GM12878 (cell line): ENCODE measurements at regions of chr4 and their contacts with region 1.

Region 1: DNA sequence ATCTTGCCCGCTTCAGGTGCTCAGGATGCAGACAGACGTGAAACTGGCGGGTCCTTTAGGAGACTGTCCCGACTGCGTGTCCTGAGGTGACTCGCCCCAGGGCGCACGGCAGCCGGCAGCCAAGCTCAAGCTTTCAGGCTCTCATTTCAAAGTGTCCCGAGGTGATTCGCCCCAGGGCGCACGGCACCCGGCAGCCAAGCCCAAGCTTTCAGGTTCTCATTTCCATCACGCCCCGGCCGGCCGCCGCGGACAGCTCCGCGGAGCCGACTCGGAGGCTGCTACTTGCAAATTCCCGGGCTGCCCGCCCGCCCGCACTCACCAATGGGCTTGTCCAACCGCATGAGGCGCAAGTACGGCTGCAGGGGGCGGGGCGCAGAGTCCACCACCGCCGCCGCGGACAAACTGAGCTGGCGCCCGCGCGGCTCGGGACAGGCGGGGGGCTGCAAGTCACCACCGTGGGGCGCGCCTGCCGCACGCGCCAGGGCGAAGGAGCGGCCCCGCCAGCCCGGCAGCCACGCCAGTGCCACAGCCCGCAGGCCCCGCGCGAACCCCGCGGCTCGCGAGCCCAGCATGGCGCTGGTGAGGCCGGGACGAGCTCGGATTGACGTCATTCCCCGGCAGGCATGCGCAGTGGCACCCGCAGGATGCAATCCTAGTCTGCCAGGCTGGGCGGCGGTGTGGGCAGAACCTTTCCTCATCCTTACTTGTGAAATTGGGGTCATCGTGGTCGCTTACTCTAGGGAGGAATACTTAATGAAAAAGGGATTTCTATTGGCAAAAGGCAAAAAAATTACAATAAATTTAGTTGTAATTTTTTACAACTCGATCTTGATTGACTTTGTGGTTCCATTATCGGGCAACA is at the start of gene COQ2:
- DNase-seq: no peak
- ATAC-seq: peak; percentile 80
- H3K4me3 ChIP-seq: peak within 1 kb of the TSS; percentile 69
- H3K27ac ChIP-seq: peak within 1 kb of the TSS; percentile 63
- H3K4me1 ChIP-seq: peaks cover 6% of the 10 kb centered on the region
- H3K27me3 ChIP-seq: no peaks in the 10 kb centered on the region
- CTCF ChIP-seq: peak in 2 of 3 experiments; percentile 10 to 16; a peak in 1 of 6 replicates
- EP300 ChIP-seq: no peak
- POLR2A ChIP-seq: peak; percentile 84
- RAD21 ChIP-seq: no peak
- polyA plus RNA-seq, gene COQ2: 5.0 to 11.2 TPM

Region 2: DNA sequence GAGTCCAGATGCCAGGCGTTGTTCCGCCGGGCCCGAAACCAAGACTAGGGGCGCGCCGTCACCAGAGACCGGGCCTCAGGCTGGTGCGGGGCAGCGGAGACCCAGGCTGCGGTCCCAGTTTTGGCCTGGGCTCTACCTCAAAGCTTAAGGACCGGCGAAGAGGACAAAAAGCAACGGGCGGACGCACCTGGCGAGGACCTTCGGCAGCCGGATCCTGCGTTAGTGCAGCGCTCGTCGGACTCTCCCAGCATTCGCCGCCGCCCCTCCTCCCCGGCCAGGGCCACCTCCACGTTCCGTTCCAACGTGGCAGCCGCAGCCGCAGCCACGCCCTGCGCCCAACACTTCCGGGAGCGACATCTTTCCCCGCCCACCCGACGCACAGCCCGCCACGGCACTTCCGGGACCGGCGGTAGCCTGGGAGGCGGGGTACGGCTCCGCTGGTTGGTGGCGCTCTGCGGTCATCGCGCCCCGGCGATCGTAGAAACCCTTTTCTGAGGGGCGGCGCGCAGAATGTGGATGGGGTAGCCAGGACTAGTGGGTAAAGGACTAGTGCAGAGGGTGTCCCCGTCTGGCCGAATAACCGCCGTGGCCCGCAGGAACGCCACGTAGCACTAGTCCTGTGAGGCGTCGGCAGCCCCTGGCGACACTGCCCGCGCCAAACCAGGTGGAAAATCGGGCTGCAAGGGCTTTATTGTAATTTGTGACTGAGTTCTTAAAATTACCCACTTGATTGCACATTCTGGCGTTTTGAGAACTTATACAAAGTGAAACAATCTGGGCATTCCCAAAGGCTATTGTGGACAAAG is 393.3 kb before region 1 on chr4 and contains the start of gene SEC31A:
- CTCF ChIA-PET with region 1: interaction called, 4 read pairs
- POLR2A ChIA-PET with region 1: no interaction called
- RAD21 ChIA-PET with region 1: interaction called, 5 read pairs
- SMC1A ChIA-PET with region 1: interaction called, 5 read pairs
- in situ Hi-C with region 1: loop called (anchors 5 kb)
- intact Hi-C with region 1: no loop called
- DNase-seq: peak; percentile 84
- ATAC-seq: peak; percentile 90
- H3K4me3 ChIP-seq: peak within 1 kb of the TSS; percentile 90
- H3K27ac ChIP-seq: peak within 1 kb of the TSS; percentile 94
- H3K4me1 ChIP-seq: peaks cover 3% of the 10 kb centered on the region; the same call in 1 of the 2 replicates
- H3K27me3 ChIP-seq: no peaks in the 10 kb centered on the region
- CTCF ChIP-seq: 0 out of 6 replicates have a peak, but pooled peaks of 1 of the 3 experiments have one; percentile 15
- EP300 ChIP-seq: peak in 1 of 2 experiments; percentile 31; a peak in 1 of 4 replicates
- POLR2A ChIP-seq: peak; percentile 99
- RAD21 ChIP-seq: no peak
- polyA plus RNA-seq, gene SEC31A: 74.6 to 80.8 TPM

Region 3: GRCh38 chr4:83054928-83055327 is 229.5 kb before region 1 on chr4:
- CTCF ChIA-PET with region 1: interaction called, 38 read pairs
- POLR2A ChIA-PET with region 1: no interaction called
- RAD21 ChIA-PET with region 1: interaction called, 13 read pairs
- SMC1A ChIA-PET with region 1: interaction called, 47 read pairs
- in situ Hi-C with region 1: no loop called
- intact Hi-C with region 1: loop called (anchors 1 kb)
- DNase-seq: no peak
- ATAC-seq: peak; percentile 67
- H3K4me3 ChIP-seq: no peak overlapping the region
- H3K27ac ChIP-seq: no peak overlapping the region
- H3K4me1 ChIP-seq: no peaks in the 10 kb centered on the region
- H3K27me3 ChIP-seq: no peaks in the 10 kb centered on the region
- CTCF ChIP-seq: peak; percentile 19 to 48 (median 38); a peak in 3 of 6 replicates
- EP300 ChIP-seq: no peak
- POLR2A ChIP-seq: no peak
- RAD21 ChIP-seq: peak; percentile 51

Region 4: GRCh38 chr4:83110223-83110945 is 174.0 kb before region 1 on chr4:
- CTCF ChIA-PET with region 1: interaction called, 9 read pairs
- POLR2A ChIA-PET with region 1: interaction called, 5 read pairs
- RAD21 ChIA-PET with region 1: interaction called, 49 read pairs
- SMC1A ChIA-PET with region 1: interaction called, 8 read pairs
- in situ Hi-C with region 1: no loop called
- intact Hi-C with region 1: no loop called
- DNase-seq: peak; percentile 90
- ATAC-seq: peak; percentile 80
- H3K4me3 ChIP-seq: peak overlapping the region; percentile 78
- H3K27ac ChIP-seq: peak overlapping the region; percentile 71
- H3K4me1 ChIP-seq: peaks cover 14% of the 10 kb centered on the region
- H3K27me3 ChIP-seq: no peaks in the 10 kb centered on the region
- CTCF ChIP-seq: peak; percentile 80 to 94 (median 89); a peak in 5 of 6 replicates
- EP300 ChIP-seq: peak; percentile 46 to 69; a peak in 2 of 4 replicates
- POLR2A ChIP-seq: peak; percentile 67
- RAD21 ChIP-seq: peak; percentile 46

Region 5: DNA sequence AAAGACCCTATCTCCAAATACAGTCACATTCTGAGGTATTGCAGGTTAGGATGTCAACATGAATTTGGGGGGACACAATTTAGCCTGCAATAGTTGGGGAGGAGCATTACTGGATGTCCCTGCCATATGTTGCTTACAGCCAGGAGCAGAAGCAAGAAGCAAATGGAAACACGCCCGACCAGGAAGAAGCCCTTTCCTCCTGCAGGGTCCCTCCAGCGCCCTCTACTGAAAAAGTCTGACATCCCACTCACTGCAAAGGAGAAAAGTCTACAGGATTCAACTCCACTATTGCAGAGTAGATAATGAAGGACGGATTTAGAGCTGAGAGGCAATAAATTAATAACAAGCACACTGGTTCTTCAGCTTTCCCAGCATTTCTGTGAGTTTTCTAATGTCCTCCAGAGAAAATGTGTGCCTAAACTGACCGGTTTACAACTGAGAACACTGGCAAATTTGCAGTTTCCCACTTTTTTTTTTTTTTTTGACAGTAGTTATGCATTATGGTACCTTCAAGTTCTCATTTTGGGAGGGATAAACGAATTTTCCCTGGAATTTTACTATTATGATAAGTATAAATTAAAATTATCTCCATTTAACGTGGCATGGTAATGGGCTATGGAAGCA is 31.5 kb before region 1 on chr4:
- CTCF ChIA-PET with region 1: interaction called, 51 read pairs
- POLR2A ChIA-PET with region 1: interaction called, 8 read pairs
- RAD21 ChIA-PET with region 1: interaction called, 32 read pairs
- SMC1A ChIA-PET with region 1: interaction called, 57 read pairs
- in situ Hi-C with region 1: no loop called
- intact Hi-C with region 1: no loop called
- DNase-seq: no peak
- ATAC-seq: peak; percentile 83
- H3K4me3 ChIP-seq: no peak overlapping the region
- H3K27ac ChIP-seq: no peak overlapping the region
- H3K4me1 ChIP-seq: peaks cover 13% of the 10 kb centered on the region; the same call in 1 of the 2 replicates
- H3K27me3 ChIP-seq: no peaks in the 10 kb centered on the region
- CTCF ChIP-seq: peak; percentile 82 to 86 (median 84)
- EP300 ChIP-seq: no peak
- POLR2A ChIP-seq: no peak
- RAD21 ChIP-seq: peak; percentile 93

Region 6: DNA sequence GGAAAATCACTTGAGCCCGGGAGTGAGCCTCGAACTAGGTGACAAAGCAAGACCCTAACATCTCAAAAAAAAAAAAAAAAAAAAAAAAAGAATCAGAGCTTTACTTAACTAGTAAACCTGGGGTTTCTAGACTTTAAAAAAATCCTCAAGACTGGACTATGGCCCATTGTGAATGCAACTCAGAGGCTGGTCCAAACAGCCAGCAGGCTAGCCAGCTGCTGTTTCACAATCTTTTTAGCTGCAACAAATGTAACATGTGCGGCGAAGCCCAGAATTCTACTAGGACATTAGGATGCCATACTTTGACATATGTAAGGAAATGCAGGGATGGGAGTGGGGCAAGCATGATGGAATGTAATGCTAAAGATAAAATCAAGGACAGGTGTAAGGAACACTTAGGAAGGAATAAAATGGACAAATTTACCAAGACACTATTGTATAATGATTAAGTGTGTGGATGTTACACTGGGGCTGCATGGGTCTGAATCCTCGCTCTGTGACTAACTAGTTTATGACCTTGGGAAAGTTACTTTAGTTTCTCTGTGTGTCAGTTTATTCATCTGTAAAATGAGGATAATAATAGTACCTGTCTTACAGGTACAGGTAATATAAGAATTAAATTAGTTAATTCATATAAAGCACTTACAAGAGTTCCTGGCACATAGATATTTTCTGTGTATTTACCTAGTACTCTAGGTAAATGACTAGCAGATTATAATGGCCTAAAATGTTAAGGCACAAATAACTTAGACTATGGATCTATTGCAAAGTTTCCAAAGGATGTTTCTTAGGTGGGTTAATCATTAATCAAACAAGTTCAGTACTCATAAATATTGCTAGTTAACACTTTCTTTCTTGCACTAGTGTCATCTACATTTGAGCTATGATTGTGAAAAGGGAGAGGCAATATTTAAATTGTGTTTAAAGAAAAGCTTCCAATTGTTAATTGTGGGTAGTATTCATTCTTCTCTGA is 121.7 kb after region 1 on chr4:
- CTCF ChIA-PET with region 1: no interaction called
- POLR2A ChIA-PET with region 1: no interaction called
- RAD21 ChIA-PET with region 1: no interaction called
- SMC1A ChIA-PET with region 1: no interaction called
- in situ Hi-C with region 1: no loop called
- intact Hi-C with region 1: no loop called
- DNase-seq: no peak
- ATAC-seq: no peak
- H3K4me3 ChIP-seq: no peak overlapping the region
- H3K27ac ChIP-seq: no peak overlapping the region
- H3K4me1 ChIP-seq: no peaks in the 10 kb centered on the region
- H3K27me3 ChIP-seq: no peaks in the 10 kb centered on the region
- CTCF ChIP-seq: no peak
- EP300 ChIP-seq: no peak
- POLR2A ChIP-seq: no peak
- RAD21 ChIP-seq: no peak

Region 7: DNA sequence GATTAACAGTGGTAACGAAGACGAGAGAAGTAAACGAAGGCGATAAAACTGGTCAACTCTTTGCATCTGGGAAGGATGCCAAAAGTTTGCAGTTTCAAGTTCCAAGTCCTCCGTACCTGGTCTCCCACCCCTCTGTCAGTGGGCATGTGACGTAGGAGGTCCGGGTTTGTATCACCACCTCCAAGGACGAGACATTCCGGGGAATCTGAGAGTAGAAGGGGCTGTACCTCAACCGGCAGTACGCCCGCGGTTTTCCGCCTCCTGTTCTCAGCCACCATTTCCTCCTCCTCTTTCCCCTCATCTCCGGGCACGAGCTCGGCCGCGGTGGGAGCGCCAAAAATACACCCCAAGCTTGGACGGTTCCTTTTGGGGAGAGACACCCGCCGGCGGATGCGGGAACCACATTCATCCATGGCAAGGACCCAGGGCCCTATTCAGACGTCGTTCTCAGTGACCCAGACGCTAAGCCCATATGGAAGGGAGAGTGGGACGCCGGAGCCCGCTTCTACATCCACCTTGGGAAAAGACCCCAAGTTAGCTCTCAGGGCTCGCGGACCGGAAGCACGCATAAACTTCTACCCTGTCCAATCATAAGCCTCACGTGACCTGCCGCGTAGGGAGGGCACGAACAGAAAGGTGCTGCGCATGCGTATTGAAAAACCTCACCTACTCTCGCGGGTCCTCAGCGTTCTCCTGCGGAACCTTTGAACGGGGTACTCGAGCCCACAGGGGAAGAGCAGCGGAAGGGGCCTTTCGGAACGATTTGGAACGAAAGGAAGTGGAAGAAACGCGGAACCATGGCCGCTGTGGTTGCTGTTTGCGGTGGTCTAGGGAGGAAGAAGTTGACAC is 171.1 kb after region 1 on chr4 and contains the starts of genes HELQ and MRPS18C:
- CTCF ChIA-PET with region 1: interaction called, 7 read pairs
- POLR2A ChIA-PET with region 1: interaction called, 5 read pairs
- RAD21 ChIA-PET with region 1: interaction called, 3 read pairs
- SMC1A ChIA-PET with region 1: no interaction called
- in situ Hi-C with region 1: no loop called
- intact Hi-C with region 1: loop called (anchors 5 kb)
- DNase-seq: peak; percentile 98
- ATAC-seq: peak; percentile 95
- H3K4me3 ChIP-seq: peak within 1 kb of the TSS; percentile 84
- H3K27ac ChIP-seq: peak within 1 kb of the TSS; percentile 99
- H3K4me1 ChIP-seq: no peaks in the 10 kb centered on the region
- H3K27me3 ChIP-seq: no peaks in the 10 kb centered on the region
- CTCF ChIP-seq: peak in 2 of 3 experiments; percentile 4 to 33; a peak in 1 of 6 replicates
- EP300 ChIP-seq: 0 out of 4 replicates have a peak, but pooled peaks of 1 of the 2 experiments have one; percentile 20
- POLR2A ChIP-seq: peak; percentile 97
- RAD21 ChIP-seq: no peak
- polyA plus RNA-seq, gene HELQ: 4.5 to 4.6 TPM
- polyA plus RNA-seq, gene MRPS18C: 277 to 283 TPM